Endothelial cell of umbilical vein (primary cell): ENCODE measurements at regions of chr3 and their contacts with region 1.

Region 1: GRCh38 chr3:14716591-14716990 is 41.6 kb downstream of the C3orf20 start:
- DNase-seq: no peak
- H3K4me3 ChIP-seq: no peak overlapping the region
- H3K27ac ChIP-seq: no peak overlapping the region
- H3K4me1 ChIP-seq: no peaks in the 10 kb centered on the region
- H3K27me3 ChIP-seq: peaks cover 6 to 13% of the 10 kb centered on the region in 2 experiments
- CTCF ChIP-seq: no peak
- POLR2A ChIP-seq: no peak

Region 2: DNA sequence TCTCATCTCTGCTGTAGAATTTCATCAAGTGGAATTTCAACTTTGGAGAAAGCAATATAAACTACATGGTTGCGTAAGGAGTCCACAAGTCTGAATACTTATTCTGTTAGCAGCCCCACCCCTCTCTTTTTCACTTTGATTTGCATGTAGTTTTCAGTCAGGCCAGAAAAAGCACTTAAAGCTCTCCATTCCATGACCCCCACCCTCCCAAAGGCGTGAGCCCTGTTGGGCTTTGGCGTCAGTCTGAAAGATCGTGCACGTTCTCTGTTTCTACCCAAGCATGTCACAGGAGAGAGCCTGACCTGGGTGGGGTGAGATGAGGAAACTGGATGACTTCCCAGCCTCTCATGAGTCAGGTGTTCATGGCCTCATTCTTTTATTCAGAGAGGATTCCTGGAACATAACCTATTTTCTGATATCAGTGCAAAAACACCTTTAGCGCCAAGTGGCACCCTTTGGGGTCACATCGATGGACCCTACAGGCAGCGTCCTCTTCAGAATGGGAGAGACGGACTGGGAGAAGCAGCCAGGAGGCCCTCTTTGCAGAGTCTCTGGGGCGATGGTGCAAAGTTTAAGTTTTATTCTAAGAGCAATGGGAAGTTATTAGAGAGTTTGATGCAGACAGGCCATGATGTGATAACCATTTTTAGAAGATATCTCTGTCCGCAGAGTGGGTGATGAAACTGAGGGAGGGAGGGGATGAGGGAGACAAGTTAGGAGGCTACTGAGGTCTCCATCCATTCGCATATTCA is 482.2 kb before region 1 on chr3:
- CTCF ChIA-PET with region 1: no interaction called
- POLR2A ChIA-PET with region 1: no interaction called
- dilution Hi-C with region 1: no loop called
- intact Hi-C with region 1: no loop called
- DNase-seq: no peak
- H3K4me3 ChIP-seq: no peak overlapping the region
- H3K27ac ChIP-seq: no peak overlapping the region
- H3K4me1 ChIP-seq: peaks cover 10% of the 10 kb centered on the region
- H3K27me3 ChIP-seq: peaks cover 2 to 3% of the 10 kb centered on the region in 2 experiments
- CTCF ChIP-seq: no peak
- POLR2A ChIP-seq: no peak

Region 3: DNA sequence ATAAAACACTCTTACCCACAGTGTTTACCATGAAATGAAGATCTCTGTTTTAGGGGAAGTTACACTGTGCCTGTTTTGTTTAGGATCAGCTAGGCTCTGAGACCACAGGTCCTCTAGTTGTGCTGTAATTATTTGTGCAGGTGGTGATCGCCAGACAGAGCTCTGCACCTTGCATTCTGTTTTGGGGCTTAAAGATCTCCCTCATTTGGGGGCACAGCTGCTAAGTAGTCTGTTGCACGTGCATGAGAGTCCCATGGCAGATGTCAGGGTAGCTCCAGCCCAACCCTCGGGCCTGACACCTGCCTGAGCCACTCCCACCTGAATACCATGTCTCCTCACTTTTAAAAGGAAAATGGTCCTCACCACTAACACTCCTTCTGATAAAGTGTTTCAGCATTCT is 29.2 kb before region 1 on chr3:
- CTCF ChIA-PET with region 1: interaction called, 3 read pairs
- POLR2A ChIA-PET with region 1: no interaction called
- dilution Hi-C with region 1: no loop called
- intact Hi-C with region 1: loop called (anchors 1 kb)
- DNase-seq: no peak
- H3K4me3 ChIP-seq: no peak overlapping the region
- H3K27ac ChIP-seq: no peak overlapping the region
- H3K4me1 ChIP-seq: no peaks in the 10 kb centered on the region
- H3K27me3 ChIP-seq: peaks cover 0 to 7% of the 10 kb centered on the region in 2 experiments
- CTCF ChIP-seq: no peak
- POLR2A ChIP-seq: no peak